Activated T-helper 2 cell treated with anti-CD3 and anti-CD28 coated beads, Interferon-gamma antibody, Interleukin-2, Interleukin-4, amounts not matched to agents 10 μg/mL and 5 μg/mL and 100 μg/mL, durations not matched to agents 14 hours and 24 hours and 36 hours (primary cell): ENCODE measurements at regions of chr10 and their contacts with region 1.

Region 1: DNA sequence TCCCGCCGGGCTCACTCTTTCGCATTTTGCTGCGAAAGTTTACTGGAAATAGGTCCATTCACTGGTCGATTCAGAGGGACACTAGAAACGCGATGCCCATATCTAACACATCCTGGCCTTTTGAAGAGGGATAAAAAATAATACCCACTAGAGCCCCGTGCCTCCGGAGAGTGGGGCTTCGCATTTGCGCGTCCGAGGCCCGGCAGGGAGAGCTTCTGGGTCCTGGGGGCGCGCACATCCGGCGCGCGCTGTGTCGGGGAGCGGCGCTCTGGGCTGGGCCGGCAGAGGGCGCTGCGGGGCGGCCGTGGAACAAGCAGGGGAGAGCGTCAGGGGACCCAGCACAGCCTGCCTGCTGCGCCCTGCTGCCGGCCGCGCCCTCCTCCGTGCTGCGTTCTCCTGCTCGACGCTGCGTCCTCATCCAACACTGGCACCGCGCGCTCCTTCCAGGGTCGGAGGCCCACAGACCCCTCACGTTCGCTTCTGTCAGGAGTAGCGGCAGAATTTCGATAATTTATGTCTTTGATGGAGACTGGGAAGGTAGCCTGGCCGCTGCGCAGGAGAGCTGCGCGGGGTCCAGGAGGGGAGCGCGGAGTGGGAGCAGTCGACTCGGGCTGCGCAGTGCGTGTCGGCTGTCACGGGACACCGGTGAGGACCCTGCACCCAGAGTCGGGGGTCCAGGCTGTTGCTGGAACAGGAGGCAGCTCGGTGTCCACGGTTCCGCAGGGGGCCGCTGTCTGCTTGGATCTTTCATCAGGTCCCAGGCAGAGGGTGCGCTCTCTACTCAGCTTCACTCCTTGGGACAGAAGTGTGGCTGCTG is 41.5 kb upstream of the ZNF32 start:
- DNase-seq: peak; percentile 81
- H3K4me3 Mint-ChIP-seq: peak overlapping the region; percentile 83
- H3K27ac Mint-ChIP-seq: peak overlapping the region; percentile 51
- H3K4me1 Mint-ChIP-seq: peaks cover 7% of the 10 kb centered on the region
- H3K27me3 Mint-ChIP-seq: peaks cover 39% of the 10 kb centered on the region

Region 2: GRCh38 chr10:43771675-43772074 is 81.5 kb after region 1 on chr10:
- intact Hi-C with region 1: no loop called
- DNase-seq: no peak
- H3K4me3 Mint-ChIP-seq: no peak overlapping the region
- H3K27ac Mint-ChIP-seq: no peak overlapping the region
- H3K4me1 Mint-ChIP-seq: peaks cover 2% of the 10 kb centered on the region
- H3K27me3 Mint-ChIP-seq: peaks cover 34% of the 10 kb centered on the region

Region 3: DNA sequence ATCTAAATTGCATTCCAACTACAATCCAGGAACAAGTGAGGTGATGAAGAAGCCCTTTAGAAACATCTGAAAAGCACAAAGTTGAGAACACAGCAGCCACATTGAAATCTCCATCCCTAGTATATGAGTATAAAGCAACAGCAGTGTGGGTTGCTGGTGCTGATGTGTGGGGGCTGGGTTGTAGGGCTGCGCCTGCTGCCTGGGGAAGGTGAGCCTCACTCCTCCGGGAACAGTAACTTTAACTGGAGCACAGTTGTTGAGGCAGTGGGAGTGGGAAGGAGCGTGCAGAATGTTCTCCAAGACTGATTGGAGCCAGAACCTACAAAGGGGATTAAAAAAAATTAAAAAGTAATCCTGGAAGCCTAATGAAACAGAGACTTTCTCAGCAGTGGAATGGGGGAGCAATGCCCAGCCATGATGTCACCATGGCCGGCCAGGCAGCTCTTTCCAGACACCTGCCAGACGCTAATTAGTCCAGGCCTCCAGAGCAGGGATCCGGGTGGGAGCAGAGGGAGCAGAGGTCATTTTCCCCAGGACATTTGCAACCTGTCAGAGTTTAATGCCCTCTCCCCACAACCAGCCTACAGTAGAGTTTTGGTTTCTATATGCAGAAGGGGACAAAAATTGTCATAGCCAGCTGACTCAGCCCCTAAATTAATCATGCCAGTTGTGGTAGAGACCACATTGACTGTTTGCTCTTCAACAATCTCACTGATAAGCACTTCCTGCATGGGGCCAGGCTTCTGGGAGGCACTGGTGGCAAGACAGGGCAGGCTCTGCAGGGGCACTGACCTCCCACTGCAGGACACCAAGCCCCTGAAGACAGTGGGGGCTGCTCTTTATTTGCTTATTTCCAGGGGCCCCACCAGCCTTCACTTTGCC is 91.6 kb after region 1 on chr10:
- intact Hi-C with region 1: loop called (anchors 1 kb)
- DNase-seq: peak; percentile 26
- H3K4me3 Mint-ChIP-seq: no peak overlapping the region
- H3K27ac Mint-ChIP-seq: peak overlapping the region; percentile 78
- H3K4me1 Mint-ChIP-seq: peaks cover 42% of the 10 kb centered on the region
- H3K27me3 Mint-ChIP-seq: no peaks in the 10 kb centered on the region

Region 4: DNA sequence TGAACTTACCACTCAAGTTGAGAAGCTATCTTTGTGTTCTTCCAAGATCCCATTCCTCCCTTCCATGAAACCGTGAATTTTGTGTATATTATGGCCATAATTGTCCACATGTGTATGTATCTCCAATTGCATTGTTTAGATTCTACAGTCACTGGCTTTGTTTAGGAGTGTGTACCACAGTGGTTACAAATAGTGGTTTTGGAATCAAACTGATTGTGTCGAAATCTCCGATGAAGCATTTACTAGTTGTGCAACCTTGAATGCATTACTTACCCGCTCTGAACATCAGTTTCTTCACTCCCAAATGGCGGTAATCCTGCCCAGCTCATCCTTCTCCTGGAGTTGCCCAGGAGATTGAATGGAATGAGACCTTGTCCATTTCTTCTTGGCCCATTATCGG is 103.5 kb after region 1 on chr10:
- intact Hi-C with region 1: no loop called
- DNase-seq: no peak
- H3K4me3 Mint-ChIP-seq: no peak overlapping the region
- H3K27ac Mint-ChIP-seq: no peak overlapping the region
- H3K4me1 Mint-ChIP-seq: no peaks in the 10 kb centered on the region
- H3K27me3 Mint-ChIP-seq: peaks cover 34% of the 10 kb centered on the region

Region 5: GRCh38 chr10:43888586-43888985 is 198.4 kb after region 1 on chr10:
- intact Hi-C with region 1: loop called (anchors 10 kb)
- DNase-seq: no peak
- H3K4me3 Mint-ChIP-seq: no peak overlapping the region
- H3K27ac Mint-ChIP-seq: no peak overlapping the region
- H3K4me1 Mint-ChIP-seq: no peaks in the 10 kb centered on the region
- H3K27me3 Mint-ChIP-seq: peaks cover 20% of the 10 kb centered on the region

Region 6: DNA sequence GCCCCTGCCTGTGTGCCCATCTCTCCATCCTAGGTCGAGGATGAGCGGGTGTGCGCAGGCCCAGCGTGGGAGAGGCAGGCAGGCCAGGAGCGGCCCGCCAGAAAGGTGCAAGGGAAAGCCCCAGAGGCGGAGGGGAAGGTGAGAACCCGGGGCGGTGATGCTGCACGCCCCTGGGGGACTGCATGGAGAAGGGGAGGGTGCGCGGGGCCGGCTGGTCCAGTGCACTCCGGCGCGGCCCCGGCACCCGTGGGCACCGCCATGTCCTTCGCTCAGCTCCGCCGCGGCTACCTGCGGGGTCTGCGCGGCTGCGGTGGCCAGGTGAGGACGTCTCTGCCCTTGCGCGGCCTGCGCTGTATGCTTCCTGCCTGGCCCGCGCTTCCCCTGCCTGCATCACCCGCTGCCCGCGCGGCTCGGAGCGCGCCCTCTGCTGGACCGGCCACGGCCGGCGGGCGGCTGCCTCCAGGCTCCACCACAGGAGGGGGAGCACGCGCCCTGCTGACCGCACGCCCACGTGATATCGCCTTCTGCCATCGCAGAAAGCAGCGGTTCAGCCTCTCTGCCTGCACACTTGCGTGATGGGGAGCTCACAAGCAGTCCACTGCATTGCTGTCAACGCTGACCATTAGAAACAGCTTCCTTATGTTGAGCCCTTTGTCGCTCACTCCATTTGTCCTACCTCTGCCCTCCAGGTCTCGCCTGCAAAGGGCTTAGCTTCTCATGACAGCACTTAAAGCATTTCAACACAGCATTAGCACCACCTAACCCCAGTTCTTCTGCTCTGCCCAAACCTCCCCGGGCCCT is 620.8 kb after region 1 on chr10:
- intact Hi-C with region 1: loop called (anchors 5 kb)
- DNase-seq: peak; percentile 62
- H3K4me3 Mint-ChIP-seq: no peak overlapping the region
- H3K27ac Mint-ChIP-seq: no peak overlapping the region
- H3K4me1 Mint-ChIP-seq: peaks cover 7% of the 10 kb centered on the region
- H3K27me3 Mint-ChIP-seq: peaks cover 12% of the 10 kb centered on the region

Region 7: DNA sequence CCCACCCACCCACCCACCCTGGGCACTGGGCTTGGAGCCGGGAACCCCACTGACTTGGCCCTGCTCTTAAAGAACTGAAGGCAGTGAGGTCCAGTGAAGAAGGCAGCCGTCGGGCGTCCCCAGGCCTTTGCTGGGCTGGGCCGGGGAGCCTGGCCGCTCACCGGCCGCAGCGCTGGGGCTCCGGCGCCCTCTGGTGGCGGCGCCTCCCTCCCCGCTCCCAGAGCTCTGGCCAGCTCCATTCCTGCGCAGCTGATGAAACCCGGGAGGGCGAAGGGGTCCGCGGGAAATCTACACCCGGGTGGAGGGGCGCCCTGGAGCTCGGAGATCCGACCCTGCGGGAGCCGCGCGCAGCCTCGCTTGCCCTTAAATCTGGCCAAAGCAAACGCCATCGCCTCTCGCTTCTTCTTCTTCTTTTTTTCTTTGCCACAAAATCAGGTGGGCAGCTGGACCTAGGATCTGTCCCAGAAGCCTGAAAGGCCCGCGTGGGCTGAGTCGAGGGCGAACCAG is 696.4 kb after region 1 on chr10:
- intact Hi-C with region 1: loop called (anchors 5 kb)
- DNase-seq: no peak
- H3K4me3 Mint-ChIP-seq: no peak overlapping the region
- H3K27ac Mint-ChIP-seq: no peak overlapping the region
- H3K4me1 Mint-ChIP-seq: no peaks in the 10 kb centered on the region
- H3K27me3 Mint-ChIP-seq: peaks cover 30% of the 10 kb centered on the region